Mucosa of descending colon (tissue), 3 donors: ENCODE measurements at regions of chr7 and their contacts with region 1.

Region 1: GRCh38 chr7:123208793-123209192 is 9.0 kb upstream of the SLC13A1 start:
- DNase-seq: peak in 1 of 3 donors; percentile 44
- ATAC-seq: peak; percentile 72
- H3K4me3 ChIP-seq: no peak overlapping the region
- H3K4me1 ChIP-seq: peaks cover 16% of the 10 kb centered on the region
- CTCF ChIP-seq: no peak

Region 2: GRCh38 chr7:123271231-123271630 is 62.4 kb after region 1 on chr7:
- intact Hi-C with region 1: no loop called
- DNase-seq: no peak
- ATAC-seq: no peak
- H3K4me3 ChIP-seq: no peak overlapping the region
- H3K4me1 ChIP-seq: no peaks in the 10 kb centered on the region
- CTCF ChIP-seq: no peak

Region 3: DNA sequence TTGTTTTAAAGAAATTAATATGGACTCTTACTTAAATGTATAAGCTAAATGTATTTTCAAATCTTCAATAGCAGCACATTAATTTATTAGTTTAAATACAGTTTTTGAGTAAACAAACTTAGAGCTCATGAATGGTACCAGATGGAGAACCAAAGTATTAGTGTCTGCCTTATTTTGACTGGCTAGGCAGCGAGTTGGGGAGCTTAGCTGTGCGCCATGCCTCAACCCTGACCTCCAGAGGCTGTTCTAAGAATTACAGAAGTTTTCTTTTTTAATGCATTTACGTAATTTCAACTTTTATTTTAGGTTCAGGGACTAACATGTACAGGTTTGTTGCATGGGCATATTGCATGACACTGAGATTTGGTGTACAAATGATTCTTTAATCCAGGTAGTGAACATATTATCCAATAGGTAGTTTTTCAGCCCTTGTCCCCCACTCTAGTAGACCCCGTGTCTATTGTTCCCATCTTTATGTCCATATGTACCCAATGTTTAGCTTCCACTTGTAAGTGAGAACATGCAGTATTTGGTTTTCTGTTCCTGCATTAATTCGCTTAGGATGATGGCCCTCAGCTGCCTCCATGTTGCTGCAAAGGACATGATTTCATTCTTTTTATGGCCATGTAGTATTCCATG is 158.8 kb after region 1 on chr7:
- intact Hi-C with region 1: loop called in 1 of 2 experiments (anchors 10 kb)
- DNase-seq: peak in 1 of 3 donors; percentile 22
- ATAC-seq: peak; percentile 67
- H3K4me3 ChIP-seq: no peak overlapping the region
- H3K4me1 ChIP-seq: no peaks in the 10 kb centered on the region
- CTCF ChIP-seq: peak; percentile 14